ENCODE measurements at regions of chr16 and their contacts with region 1.

Region 1: DNA sequence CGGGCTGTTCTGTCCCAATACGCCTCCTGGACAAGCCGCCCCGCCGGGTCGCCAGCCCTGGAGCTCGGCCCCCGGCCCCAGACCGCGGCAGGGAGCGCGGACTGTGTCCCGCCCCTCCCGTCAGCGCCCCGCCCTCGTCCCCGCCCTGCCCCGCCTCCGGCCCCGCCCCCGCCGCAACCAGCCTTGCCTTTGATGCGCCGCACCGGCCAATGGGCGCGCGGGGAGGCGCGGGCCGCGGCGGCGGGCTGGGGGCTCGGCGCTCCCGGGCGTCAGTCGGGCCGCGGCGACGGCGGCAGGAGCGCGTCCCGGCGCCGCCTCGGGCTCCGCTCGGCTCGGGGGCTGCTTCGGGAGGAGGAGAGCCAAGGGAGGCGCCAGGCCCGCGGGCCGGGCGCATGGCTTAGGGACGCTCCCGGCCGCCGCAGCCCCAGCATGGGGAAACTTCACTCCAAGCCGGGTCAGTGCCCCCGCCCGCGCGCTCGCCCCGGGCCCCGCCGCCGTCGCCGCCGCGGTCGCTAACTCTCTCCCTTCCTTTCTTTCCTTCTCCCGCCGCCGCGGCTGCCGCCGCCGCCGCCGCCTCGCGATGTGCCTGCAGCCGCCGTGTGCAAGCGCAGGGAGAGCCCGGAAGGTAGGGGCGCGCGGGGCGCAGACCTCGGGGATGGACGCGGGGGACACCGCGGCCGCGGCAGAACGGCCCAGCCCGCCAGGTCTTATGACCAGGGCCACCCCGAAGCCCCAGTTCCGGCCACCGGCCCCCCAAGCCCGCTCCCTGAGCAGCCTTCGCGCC is at the start of gene NKD1:
- DNase-seq: peak; percentile 84
- ATAC-seq: peak; percentile 87
- H3K4me3 ChIP-seq: peak within 1 kb of the TSS; percentile 93 to 100 (median 98)
- H3K27ac ChIP-seq: peak within 1 kb of the TSS; percentile 88
- H3K4me1 ChIP-seq: peaks cover 62% of the 10 kb centered on the region
- H3K27me3 ChIP-seq: peaks cover 0 to 6% of the 10 kb centered on the region in 2 experiments; a peak in 1 of 5 replicates
- CTCF ChIP-seq: no peak
- EP300 ChIP-seq: peak in 1 of 2 experiments; percentile 4; a peak in 1 of 4 replicates
- POLR2A ChIP-seq: peak; percentile 93 to 95
- RAD21 ChIP-seq: peak; percentile 68
- total RNA-seq, gene NKD1: 59.0 and 70.4 TPM in 2 replicates

Region 2: GRCh38 chr16:50467943-50468760 is 80.2 kb before region 1 on chr16:
- CTCF ChIA-PET with region 1: interaction called, 3 read pairs
- POLR2A ChIA-PET with region 1: interaction called, 14 read pairs
- in situ Hi-C with region 1: loop called (anchors 5 kb)
- intact Hi-C with region 1: loop called (anchors 1 kb)
- DNase-seq: peak; percentile 97
- ATAC-seq: peak; percentile 89
- H3K4me3 ChIP-seq: peak overlapping the region in 2 of 3 experiments; percentile 11 to 24; a peak in 2 of 6 replicates
- H3K27ac ChIP-seq: peak overlapping the region; percentile 92
- H3K4me1 ChIP-seq: peaks cover 91% of the 10 kb centered on the region
- H3K27me3 ChIP-seq: no peaks in the 10 kb centered on the region
- CTCF ChIP-seq: peak; percentile 49
- EP300 ChIP-seq: peak; percentile 97 to 100
- POLR2A ChIP-seq: peak; percentile 63 to 67
- RAD21 ChIP-seq: peak; percentile 81

Region 3: GRCh38 chr16:50530277-50531236 is 17.8 kb before region 1 on chr16:
- CTCF ChIA-PET with region 1: no interaction called
- POLR2A ChIA-PET with region 1: interaction called, 31 read pairs
- in situ Hi-C with region 1: no loop called
- intact Hi-C with region 1: loop called (anchors 1 kb)
- DNase-seq: peak; percentile 97
- ATAC-seq: peak; percentile 86
- H3K4me3 ChIP-seq: no peak overlapping the region; a peak in 1 of 6 replicates
- H3K27ac ChIP-seq: peak overlapping the region; percentile 74
- H3K4me1 ChIP-seq: peaks cover 63% of the 10 kb centered on the region
- H3K27me3 ChIP-seq: no peaks in the 10 kb centered on the region
- CTCF ChIP-seq: peak; percentile 11
- EP300 ChIP-seq: peak in 1 of 2 experiments; percentile 94; a peak in 2 of 4 replicates
- POLR2A ChIP-seq: peak in 1 of 2 experiments; percentile 34; a peak in 1 of 4 replicates
- RAD21 ChIP-seq: no peak

Region 4: GRCh38 chr16:50559804-50560514 is 11.6 kb after region 1 on chr16:
- CTCF ChIA-PET with region 1: no interaction called
- POLR2A ChIA-PET with region 1: interaction called, 31 read pairs
- in situ Hi-C with region 1: no loop called
- intact Hi-C with region 1: no loop called
- DNase-seq: no peak
- ATAC-seq: peak; percentile 3; the same call in 1 of the 3 replicates
- H3K4me3 ChIP-seq: peak overlapping the region in 1 of 3 experiments; percentile 0; a peak in 1 of 6 replicates
- H3K27ac ChIP-seq: no peak overlapping the region
- H3K4me1 ChIP-seq: peaks cover 91% of the 10 kb centered on the region
- H3K27me3 ChIP-seq: no peaks in the 10 kb centered on the region
- CTCF ChIP-seq: no peak
- EP300 ChIP-seq: no peak
- POLR2A ChIP-seq: 0 out of 4 replicates have a peak, but pooled peaks of 1 of the 2 experiments have one; percentile 31
- RAD21 ChIP-seq: no peak